ENCODE measurements at regions of chr17 and their contacts with region 1.

Region 1: GRCh38 chr17:1796800-1797199 is 32.9 kb downstream of the SMYD4 start:
- DNase-seq: no peak
- ATAC-seq: peak; percentile 82

Region 2: DNA sequence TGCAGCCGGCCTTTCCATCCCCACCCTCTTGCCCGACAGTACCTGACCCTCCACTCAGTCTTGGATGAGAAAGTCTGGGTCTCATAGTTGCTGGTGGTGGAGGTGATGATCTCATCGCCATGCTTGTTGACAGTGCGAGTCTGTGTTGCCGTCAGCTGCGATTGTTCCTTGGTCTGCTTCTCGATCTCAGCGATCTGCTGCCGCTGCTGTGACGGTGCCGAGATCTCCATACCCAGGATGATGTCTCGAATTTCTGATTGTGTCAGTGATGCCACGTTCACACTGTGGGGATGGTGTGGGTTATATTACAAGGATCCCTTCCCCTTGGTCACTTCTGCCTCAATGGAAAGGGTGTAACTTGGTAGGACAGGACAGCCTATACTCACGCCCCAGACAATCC is 143.1 kb before region 1 on chr17:
- intact Hi-C with region 1: no loop called
- DNase-seq: no peak
- ATAC-seq: no peak

Region 3: DNA sequence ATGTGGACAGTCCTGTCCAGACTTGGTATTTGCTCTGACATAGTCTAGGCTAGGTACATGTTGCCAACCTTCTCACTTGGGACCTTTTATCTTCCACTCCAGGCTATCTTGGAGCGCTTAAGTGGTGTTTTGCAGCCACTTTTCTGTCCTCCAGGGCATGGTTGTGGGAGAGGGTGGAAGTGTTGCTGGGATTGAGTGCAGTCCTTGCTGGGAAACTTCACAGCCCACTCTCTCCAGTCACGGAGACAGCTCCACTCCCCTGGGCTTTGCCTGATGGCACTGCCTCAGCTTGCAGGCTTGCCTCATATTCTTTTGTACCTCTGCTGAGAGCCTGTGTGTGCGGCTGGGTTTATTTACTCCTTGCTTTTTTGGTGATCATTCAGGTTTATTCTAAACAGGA is 50.4 kb after region 1 on chr17:
- intact Hi-C with region 1: loop called (anchors 2 kb)
- DNase-seq: no peak
- ATAC-seq: peak; percentile 98